ENCODE measurements at regions of chr14 and their contacts with region 1.

Region 1: DNA sequence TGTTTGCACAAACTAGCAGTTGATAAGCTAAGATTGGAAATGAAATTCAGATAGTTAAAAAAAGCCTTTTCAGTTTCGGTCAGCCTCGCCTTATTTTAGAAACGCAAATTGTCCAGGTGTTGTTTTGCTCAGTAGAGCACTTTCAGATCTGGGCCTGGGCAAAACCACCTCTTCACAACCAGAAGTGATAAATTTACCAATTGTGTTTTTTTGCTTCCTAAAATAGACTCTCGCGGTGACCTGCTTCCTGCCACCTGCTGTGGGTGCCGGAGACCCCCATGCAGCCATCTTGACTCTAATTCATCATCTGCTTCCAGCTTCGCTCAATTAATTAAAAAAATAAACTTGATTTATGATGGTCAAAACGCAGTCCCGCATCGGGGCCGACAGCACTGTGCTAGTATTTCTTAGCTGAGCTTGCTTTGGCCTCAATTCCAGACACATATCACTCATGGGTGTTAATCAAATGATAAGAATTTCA is 335.6 kb downstream of the TMEM121 start:
- DNase-seq: peak; percentile 76
- CTCF ChIP-seq: no peak

Region 2: DNA sequence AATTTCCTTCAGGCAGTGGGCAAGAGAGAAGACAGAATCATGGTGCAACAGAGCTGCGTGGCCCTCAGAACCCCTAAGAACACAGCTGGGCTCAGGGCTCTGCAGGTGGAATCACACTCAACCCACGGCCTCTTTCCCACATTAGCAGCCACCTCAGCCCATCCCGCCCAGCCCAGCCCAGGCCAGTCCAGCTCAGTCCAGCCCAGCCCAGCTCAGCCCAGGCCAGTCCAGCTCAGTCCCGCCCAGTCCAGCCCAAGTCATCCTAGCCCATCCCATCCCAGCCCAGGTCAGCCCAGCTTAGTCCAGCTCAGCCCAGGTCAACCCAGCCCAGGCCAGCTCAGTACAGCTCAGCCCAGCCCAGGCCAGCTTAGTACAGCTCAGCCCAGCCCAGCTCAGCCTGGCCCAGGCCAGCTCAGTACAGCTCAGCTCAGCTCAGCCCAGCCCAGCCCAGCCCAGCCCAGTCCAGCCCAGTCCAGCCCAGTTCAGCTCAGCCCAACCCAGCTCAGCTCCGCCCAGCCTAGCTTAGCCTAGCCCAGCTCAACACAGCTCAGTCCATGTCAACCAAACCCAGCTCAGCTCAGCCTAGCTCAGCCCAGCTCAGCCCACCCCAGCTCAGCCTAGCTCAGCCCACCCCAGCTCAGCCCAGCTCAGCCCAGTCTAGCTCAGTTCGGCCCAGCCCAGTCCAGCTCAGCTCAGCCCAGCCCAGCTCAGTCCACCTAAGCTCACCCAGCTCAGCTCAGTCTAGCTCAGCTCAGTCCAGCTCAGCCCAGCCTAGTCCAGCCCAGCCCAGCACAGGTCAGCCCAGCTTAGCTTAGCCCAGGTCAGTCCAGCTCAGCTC is 152.5 kb before region 1 on chr14:
- CTCF ChIA-PET with region 1: interaction called, 16 read pairs
- POLR2A ChIA-PET with region 1: interaction called, 106 read pairs
- DNase-seq: no peak
- CTCF ChIP-seq: no peak

Region 3: DNA sequence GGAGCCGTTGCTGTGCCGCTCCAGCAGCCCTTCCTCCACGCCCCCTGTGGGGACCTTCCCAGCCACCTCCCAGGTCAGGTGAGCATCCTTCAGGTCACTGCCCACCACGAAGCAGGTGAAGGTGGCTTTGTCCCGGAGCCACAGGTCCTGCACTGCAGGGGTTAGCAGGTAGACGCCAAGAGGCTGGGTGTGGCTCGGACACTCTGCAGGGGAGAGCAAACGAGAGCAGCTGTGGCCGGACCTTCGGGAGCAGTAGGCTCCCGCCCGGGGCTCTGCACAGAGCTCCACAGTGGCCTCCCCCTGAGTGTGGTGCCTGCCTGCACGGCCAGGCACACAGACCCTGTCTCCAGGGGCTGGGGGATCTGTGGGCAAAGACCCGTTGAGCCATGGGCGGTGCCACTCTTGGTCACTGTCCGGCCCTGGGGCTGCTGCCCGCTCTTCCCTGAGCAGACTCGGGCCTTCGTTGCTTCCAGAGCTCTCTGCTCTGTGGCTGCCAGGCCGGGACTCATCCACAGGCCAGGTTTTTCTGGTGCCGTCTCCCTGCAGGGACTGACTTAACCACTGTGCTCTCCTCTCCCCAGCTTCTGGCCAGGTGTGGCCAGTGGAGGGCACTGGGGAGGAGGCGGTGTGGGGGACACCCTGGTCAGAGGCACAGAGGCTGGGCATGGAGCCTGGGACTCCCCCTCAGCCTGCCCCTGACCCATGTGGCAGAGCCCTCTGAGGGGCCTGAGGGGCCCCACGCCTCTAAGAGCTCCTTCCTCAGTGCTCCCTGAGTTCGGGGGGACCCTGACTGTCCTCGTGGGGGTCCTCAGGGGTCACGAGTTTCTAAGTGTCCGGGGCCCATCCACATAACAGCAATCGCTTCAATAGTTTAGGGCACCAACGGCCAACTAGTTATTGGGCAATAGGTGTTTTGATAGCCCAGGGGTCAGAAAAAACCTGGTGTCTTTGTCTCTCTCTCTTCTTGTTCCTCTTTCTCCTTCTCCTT is 20.7 kb before region 1 on chr14:
- CTCF ChIA-PET with region 1: no interaction called
- POLR2A ChIA-PET with region 1: no interaction called
- DNase-seq: no peak
- CTCF ChIP-seq: no peak

Region 4: GRCh38 chr14:105931808-105932483 is 69.9 kb after region 1 on chr14:
- CTCF ChIA-PET with region 1: no interaction called
- POLR2A ChIA-PET with region 1: no interaction called
- DNase-seq: no peak
- CTCF ChIP-seq: peak; percentile 25

Region 5: GRCh38 chr14:106343626-106344025 is 481.6 kb after region 1 on chr14:
- CTCF ChIA-PET with region 1: interaction called, 10 read pairs
- POLR2A ChIA-PET with region 1: no interaction called
- DNase-seq: no peak
- CTCF ChIP-seq: no peak

Measured in GM10248 (cell line).